Endothelial cell of umbilical vein (primary cell): ENCODE measurements at regions of chr1 and their contacts with region 1.

Region 1: DNA sequence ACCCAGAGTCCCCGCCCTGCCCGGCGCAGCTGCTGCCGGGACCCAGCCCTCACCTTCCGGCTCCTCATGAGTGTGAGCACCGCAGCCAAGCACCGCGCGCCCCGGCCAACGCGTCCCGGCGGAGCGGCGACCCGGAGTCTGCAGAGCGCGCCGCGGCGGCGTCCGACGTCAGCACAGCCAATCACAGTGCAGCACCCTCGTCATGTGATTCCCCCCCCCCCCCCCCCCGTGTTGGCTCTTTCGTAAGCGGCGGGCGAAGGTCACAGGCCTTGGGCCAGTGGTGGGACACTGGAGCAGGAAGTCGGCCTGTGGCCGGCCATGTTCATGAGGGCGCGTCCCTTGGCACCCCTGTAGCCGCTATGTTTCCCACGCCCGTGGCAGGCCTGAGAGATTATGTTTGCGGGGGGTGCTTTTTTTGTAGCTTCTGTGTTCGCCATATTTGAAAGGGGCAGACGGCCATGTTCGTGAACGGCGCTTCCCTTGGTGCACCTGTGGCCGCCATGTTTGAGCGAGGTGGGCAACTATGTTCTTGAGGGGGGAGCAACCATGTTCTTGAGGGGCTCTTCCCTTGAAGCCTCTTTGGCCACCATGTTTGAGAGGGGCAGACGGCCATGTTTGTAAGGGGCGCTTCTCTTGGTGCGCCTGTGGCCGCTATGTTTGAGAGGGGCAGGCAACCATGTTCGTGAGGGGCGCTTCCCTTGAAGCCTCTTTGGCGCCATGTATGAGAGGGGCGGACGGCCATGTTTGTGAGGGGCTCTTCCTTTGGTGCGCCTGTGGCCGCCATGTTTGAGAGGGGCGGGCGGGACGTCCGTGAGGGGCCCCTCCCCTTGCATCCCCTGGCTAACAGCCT is at the start of gene C1orf174:
- DNase-seq: peak; percentile 99
- H3K4me3 ChIP-seq: peak within 1 kb of the TSS; percentile 62 to 78 (median 77)
- H3K27ac ChIP-seq: peak within 1 kb of the TSS; percentile 85
- H3K4me1 ChIP-seq: peaks cover 12% of the 10 kb centered on the region
- H3K27me3 ChIP-seq: no peaks in the 10 kb centered on the region
- CTCF ChIP-seq: no peak
- POLR2A ChIP-seq: peak; percentile 68
- total RNA-seq, gene C1orf174: 27.6 and 28.0 TPM in 2 replicates

Region 2: GRCh38 chr1:2525920-2526823 is 1374.2 kb before region 1 on chr1 and contains the start of gene PANK4:
- CTCF ChIA-PET with region 1: no interaction called
- POLR2A ChIA-PET with region 1: no interaction called
- dilution Hi-C with region 1: no loop called
- intact Hi-C with region 1: loop called (anchors 1 kb)
- DNase-seq: peak; percentile 84
- H3K4me3 ChIP-seq: peak within 1 kb of the TSS; percentile 75 to 97 (median 91)
- H3K27ac ChIP-seq: peak within 1 kb of the TSS; percentile 58
- H3K4me1 ChIP-seq: peaks cover 17% of the 10 kb centered on the region
- H3K27me3 ChIP-seq: peaks cover 10 to 17% of the 10 kb centered on the region in 2 experiments
- CTCF ChIP-seq: no peak
- POLR2A ChIP-seq: peak; percentile 82
- total RNA-seq, gene PANK4: 34.0 and 34.7 TPM in 2 replicates

Region 3: GRCh38 chr1:2586154-2587070 is 1313.9 kb before region 1 on chr1 and contains the start of gene PRXL2B:
- CTCF ChIA-PET with region 1: no interaction called
- POLR2A ChIA-PET with region 1: no interaction called
- dilution Hi-C with region 1: no loop called
- intact Hi-C with region 1: loop called (anchors 1 kb)
- DNase-seq: peak; percentile 98
- H3K4me3 ChIP-seq: peak within 1 kb of the TSS; percentile 56 to 73 (median 61)
- H3K27ac ChIP-seq: peak within 1 kb of the TSS; percentile 75
- H3K4me1 ChIP-seq: peaks cover 15% of the 10 kb centered on the region
- H3K27me3 ChIP-seq: no peaks in the 10 kb centered on the region
- CTCF ChIP-seq: no peak
- POLR2A ChIP-seq: peak; percentile 33
- total RNA-seq, gene PRXL2B: 55.8 and 56.8 TPM in 2 replicates

Region 4: GRCh38 chr1:3624200-3625136 is 275.9 kb before region 1 on chr1 and contains the start of gene TPRG1L:
- CTCF ChIA-PET with region 1: no interaction called
- POLR2A ChIA-PET with region 1: no interaction called
- dilution Hi-C with region 1: no loop called
- intact Hi-C with region 1: loop called (anchors 2 kb)
- DNase-seq: peak; percentile 97
- H3K4me3 ChIP-seq: peak within 1 kb of the TSS; percentile 53 to 60 (median 54)
- H3K27ac ChIP-seq: peak within 1 kb of the TSS; percentile 25
- H3K4me1 ChIP-seq: peaks cover 13% of the 10 kb centered on the region
- H3K27me3 ChIP-seq: no peaks in the 10 kb centered on the region
- CTCF ChIP-seq: no peak
- POLR2A ChIP-seq: peak; percentile 3
- total RNA-seq, gene TPRG1L: 46.2 and 53.8 TPM in 2 replicates

Region 5: GRCh38 chr1:3772027-3772714 is 128.2 kb before region 1 on chr1:
- CTCF ChIA-PET with region 1: no interaction called
- POLR2A ChIA-PET with region 1: no interaction called
- dilution Hi-C with region 1: no loop called
- intact Hi-C with region 1: loop called (anchors 5 kb)
- DNase-seq: peak; percentile 72
- H3K4me3 ChIP-seq: peak overlapping the region; percentile 35 to 51 (median 49)
- H3K27ac ChIP-seq: no peak overlapping the region
- H3K4me1 ChIP-seq: peaks cover 6% of the 10 kb centered on the region
- H3K27me3 ChIP-seq: no peaks in the 10 kb centered on the region
- CTCF ChIP-seq: no peak
- POLR2A ChIP-seq: no peak

Region 6: GRCh38 chr1:3796215-3797061 is 103.9 kb before region 1 on chr1 and contains the start of gene LRRC47:
- CTCF ChIA-PET with region 1: interaction called, 3 read pairs
- POLR2A ChIA-PET with region 1: no interaction called
- dilution Hi-C with region 1: no loop called
- intact Hi-C with region 1: loop called (anchors 1 kb)
- DNase-seq: peak; percentile 89
- H3K4me3 ChIP-seq: peak within 1 kb of the TSS; percentile 46 to 73 (median 73)
- H3K27ac ChIP-seq: peak within 1 kb of the TSS; percentile 43
- H3K4me1 ChIP-seq: peaks cover 8% of the 10 kb centered on the region
- H3K27me3 ChIP-seq: peaks cover 0 to 1% of the 10 kb centered on the region in 2 experiments
- CTCF ChIP-seq: no peak
- POLR2A ChIP-seq: peak; percentile 64
- total RNA-seq, gene LRRC47: 41.2 and 42.5 TPM in 2 replicates

Region 7: DNA sequence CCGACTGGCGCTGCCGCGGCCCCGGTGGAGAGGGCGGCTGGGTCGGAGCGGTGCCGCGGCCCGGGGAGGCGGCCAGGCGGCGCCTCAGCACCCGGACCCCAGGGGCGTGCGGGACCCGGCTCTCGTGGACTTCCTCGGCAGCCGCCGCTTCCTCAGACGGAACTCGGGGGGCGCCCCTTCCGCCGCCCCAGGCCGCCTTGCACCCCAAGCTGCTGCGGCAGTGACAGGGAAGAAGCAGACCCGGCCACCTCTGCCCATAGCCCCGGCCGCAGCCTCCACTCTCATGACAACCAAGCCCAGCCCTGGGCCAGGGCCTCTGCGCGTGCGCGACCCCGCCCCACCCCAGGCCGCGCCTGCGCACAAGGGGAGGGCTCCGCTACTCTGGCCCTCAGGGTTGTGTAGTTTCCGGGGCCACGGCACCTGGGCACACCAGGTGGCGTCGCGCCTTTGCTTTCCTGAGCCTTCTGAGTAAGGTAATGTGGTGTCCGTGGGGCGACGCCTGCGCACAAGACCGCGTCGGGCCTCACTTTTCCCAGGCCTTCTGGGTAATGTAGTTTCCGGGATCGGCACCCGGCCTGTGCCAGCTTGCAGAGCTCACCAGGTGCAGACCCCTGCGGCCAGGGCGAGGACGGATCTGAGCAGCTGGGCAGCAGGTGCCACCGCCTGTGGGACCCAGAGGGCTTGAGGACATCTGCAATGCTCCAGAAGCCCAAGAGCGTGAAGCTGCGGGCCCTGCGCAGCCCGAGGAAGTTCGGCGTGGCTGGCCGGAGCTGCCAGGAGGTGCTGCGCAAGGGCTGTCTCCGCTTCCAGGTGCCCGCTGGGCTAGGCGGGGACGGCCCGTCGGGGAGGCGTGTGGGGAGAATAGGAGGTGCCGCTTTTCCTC is 43.2 kb before region 1 on chr1 and contains the starts of genes CEP104 and DFFB:
- CTCF ChIA-PET with region 1: interaction called, 9 read pairs
- POLR2A ChIA-PET with region 1: no interaction called
- dilution Hi-C with region 1: no loop called
- intact Hi-C with region 1: loop called (anchors 1 kb)
- DNase-seq: peak; percentile 90
- H3K4me3 ChIP-seq: peak within 1 kb of the TSS; percentile 16 to 76 (median 72)
- H3K27ac ChIP-seq: peak within 1 kb of the TSS; percentile 59
- H3K4me1 ChIP-seq: peaks cover 9% of the 10 kb centered on the region
- H3K27me3 ChIP-seq: no peaks in the 10 kb centered on the region
- CTCF ChIP-seq: no peak
- POLR2A ChIP-seq: peak; percentile 61
- total RNA-seq, gene CEP104: 41.8 and 43.0 TPM in 2 replicates
- total RNA-seq, gene DFFB: 10.6 and 11.7 TPM in 2 replicates